Activated CD4-positive, alpha-beta T cell treated with anti-CD3 and anti-CD28 coated beads for 36 hours (primary cell): ENCODE measurements at regions of chr7 and their contacts with region 1.

Region 1: DNA sequence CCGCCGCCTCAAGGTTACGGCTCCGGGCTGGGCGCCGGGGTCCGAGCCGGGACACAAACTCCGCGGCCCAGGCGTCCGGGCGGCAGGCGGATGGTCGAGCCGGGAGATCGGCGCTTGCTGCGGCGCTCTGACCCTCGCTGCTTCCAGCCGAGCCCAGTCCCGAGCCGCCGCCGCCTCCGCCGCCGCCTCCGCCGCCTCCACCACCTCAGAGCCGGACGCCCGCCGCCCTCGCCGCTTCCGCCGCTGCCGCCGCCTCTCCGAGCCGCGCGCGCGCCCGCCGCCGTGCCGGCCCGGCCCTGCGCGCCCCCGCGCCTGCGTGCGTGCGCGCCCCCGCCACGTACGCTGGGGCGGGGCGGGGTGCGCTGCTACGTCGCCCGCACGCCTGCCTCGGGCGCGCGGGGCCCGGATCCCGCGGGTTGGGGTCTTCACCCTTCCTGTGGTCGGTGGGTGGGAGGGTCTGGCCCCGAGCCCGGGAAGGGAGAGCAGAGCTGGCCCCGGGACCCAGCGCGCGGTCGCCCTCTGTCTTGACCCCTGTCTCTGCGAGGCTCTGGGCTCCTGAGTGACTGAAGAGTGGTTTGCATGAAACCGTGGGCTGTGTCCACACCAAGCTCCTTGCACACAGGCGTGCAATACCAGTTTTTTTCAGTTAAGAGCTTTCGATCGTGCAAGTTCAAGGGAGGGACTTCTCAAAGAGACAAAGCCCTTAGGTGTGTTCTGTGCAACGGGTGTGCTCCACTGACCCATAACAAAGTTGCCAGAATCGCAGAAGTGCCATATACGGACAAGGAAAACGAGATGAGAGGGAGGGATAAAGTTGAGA is at the start of gene SMURF1:
- DNase-seq: peak; percentile 83
- ATAC-seq: peak; percentile 37
- H3K4me3 Mint-ChIP-seq: peak within 1 kb of the TSS; percentile 91
- H3K27ac Mint-ChIP-seq: peak within 1 kb of the TSS; percentile 93
- H3K4me1 Mint-ChIP-seq: peaks cover 35% of the 10 kb centered on the region
- H3K27me3 Mint-ChIP-seq: peaks cover 5% of the 10 kb centered on the region
- total RNA-seq, gene SMURF1: 12.4 to 13.4 TPM

Region 2: DNA sequence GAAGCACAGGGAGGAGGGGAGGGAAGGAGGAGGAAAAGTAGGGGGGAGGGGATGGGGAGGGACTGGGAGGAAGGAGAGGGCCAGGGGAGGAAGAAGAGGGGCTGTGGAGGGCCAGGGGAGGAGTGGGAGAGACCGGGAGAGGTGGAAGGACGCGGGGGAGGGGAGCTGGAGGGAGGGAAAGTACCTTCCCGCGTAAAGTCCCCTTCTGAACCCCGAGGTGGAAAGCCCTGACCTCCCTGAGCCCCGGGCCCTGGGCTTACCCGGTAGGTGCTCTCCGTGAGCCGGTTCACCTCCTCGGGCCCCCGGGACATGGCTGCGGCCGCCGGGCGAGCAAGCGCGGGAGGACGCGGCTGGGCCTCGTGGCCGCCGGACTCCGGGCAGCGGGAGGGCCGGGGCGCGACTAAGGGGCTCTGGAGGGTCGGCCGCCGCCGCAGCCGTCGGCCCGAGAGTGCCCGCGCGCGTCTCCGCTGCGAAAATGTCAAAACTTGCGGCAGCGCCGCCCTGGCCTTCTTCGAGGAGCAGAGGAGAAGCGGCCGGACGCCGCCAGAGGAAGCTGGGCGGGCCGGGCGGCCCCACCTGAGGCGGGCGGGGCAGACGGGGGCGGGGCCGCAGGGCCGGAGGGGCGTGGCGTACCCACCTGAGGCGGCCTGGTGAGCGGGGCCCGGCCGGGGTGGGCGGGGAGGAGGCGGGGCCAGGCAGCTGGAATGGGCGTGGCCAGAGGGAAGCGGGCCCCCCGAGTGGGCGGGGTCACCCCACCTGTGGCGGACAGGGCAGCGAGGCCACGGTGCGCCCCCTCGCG is 743.3 kb before region 1 on chr7 and contains the start of gene BAIAP2L1:
- CTCF ChIA-PET with region 1: no interaction called
- POLR2A ChIA-PET with region 1: no interaction called
- intact Hi-C with region 1: loop called in 1 of 2 experiments (anchors 5 kb)
- DNase-seq: peak; percentile 93
- ATAC-seq: peak; percentile 89
- H3K4me3 Mint-ChIP-seq: peak within 1 kb of the TSS; percentile 21
- H3K27ac Mint-ChIP-seq: no peak within 1 kb of the TSS
- H3K4me1 Mint-ChIP-seq: peaks cover 7% of the 10 kb centered on the region
- H3K27me3 Mint-ChIP-seq: peaks cover 20% of the 10 kb centered on the region
- total RNA-seq, gene BAIAP2L1: 2.3 to 3.0 TPM

Region 3: GRCh38 chr7:98878365-98879165 is 265.5 kb before region 1 on chr7 and contains the start of gene TRRAP:
- CTCF ChIA-PET with region 1: no interaction called
- POLR2A ChIA-PET with region 1: no interaction called
- intact Hi-C with region 1: loop called (anchors 2 to 5 kb)
- DNase-seq: peak; percentile 88
- ATAC-seq: peak; percentile 67
- H3K4me3 Mint-ChIP-seq: peak within 1 kb of the TSS; percentile 91
- H3K27ac Mint-ChIP-seq: peak within 1 kb of the TSS; percentile 96
- H3K4me1 Mint-ChIP-seq: peaks cover 30% of the 10 kb centered on the region
- H3K27me3 Mint-ChIP-seq: no peaks in the 10 kb centered on the region
- total RNA-seq, gene TRRAP: 51.7 to 54.0 TPM

Region 4: GRCh38 chr7:99102809-99103690 is 41.0 kb before region 1 on chr7:
- CTCF ChIA-PET with region 1: no interaction called
- POLR2A ChIA-PET with region 1: no interaction called
- intact Hi-C with region 1: loop called (anchors 1 to 2 kb)
- DNase-seq: peak; percentile 70
- ATAC-seq: peak; percentile 66
- H3K4me3 Mint-ChIP-seq: no peak overlapping the region
- H3K27ac Mint-ChIP-seq: peak overlapping the region; percentile 69
- H3K4me1 Mint-ChIP-seq: peaks cover 64% of the 10 kb centered on the region
- H3K27me3 Mint-ChIP-seq: no peaks in the 10 kb centered on the region

Region 5: DNA sequence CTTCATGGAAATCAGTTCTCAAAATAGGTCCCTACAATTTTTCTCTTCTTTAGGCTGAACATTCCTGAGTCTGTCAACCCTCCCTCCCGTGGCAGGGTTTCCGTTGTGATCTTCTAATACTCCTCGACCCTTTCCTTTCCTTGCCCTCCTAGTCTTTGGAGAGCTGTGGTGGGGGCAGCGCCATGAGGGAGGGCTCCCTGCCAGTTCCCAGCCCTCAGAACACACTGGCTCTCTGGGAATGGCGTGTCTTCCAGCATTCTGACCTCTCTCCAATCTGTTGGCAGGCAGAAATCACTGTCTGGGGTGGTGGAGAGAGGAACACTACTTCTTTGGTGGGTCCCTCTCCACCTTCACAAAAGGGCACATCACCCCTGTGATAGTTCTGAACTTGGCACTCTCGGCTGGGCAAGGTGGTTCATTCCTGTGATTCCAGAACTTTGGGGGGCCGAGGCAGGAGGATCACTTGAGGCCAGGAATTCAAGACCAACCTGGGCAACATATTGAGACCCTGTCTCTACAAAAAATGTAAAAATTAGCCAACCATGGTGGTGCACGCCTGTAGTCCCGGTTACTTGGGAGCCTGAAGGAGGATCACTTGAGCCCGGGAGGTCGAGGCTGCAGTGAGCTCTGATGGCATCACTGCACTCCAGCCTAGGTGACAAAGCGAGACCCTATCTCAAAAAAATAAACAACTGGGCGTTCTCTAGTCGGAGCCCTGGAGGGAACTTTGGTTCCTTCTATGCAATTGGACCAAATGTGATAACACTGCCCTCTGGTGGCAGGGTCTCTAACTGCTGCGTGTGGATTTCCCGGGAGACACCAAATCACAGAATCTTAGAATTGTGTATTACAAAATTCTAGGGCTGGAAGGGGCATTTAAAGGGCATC is 168.5 kb after region 1 on chr7:
- CTCF ChIA-PET with region 1: interaction called, 3 read pairs
- POLR2A ChIA-PET with region 1: no interaction called
- intact Hi-C with region 1: loop called in 1 of 2 experiments (anchors 5 kb)
- DNase-seq: peak; percentile 84
- ATAC-seq: peak; percentile 37
- H3K4me3 Mint-ChIP-seq: no peak overlapping the region
- H3K27ac Mint-ChIP-seq: no peak overlapping the region
- H3K4me1 Mint-ChIP-seq: peaks cover 16% of the 10 kb centered on the region
- H3K27me3 Mint-ChIP-seq: peaks cover 4% of the 10 kb centered on the region

Region 6: DNA sequence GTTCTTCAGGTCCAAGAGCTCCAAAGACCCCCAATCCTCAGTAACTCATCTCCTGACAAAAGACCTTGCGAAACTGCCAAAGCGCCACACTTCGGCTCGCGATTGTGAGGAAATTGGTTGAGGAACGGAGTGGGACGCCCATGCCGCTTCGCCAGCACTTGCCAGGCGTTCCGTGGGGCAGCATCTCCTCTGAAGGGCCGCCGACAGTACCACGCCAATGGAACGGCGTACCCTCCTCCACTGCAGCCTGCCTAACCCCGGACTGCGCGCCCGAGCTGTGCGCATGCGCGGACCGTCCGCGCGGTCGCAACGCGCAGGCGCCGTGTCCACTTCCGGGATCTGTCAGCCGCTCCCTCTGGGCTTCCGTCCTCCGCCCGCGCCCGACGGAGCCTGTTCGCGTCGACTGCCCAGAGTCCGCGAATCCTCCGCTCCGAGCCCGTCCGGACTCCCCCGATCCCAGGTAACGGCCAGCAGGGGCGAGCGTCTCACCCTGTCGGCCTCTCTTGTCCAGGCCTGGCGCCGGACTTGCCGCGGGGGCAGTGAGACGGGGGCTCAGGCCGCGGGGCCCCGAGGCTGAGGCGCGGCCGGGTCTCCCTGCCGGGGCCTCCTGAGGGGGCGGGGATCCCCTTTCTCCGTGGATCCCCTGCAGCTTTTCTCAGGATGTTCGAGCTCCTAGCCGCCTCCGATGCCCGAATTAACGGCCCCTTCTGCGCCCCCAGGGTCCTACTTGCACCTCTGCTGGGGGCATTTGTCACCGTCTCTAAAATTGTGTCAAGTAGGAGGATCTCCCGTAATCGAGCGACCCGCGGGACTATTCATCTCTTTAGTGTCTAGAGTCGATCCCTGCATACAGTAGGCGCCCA is 181.7 kb after region 1 on chr7 and contains the start of gene ARPC1A:
- CTCF ChIA-PET with region 1: no interaction called
- POLR2A ChIA-PET with region 1: no interaction called
- intact Hi-C with region 1: loop called (anchors 1 to 5 kb)
- DNase-seq: peak; percentile 95
- ATAC-seq: peak; percentile 86
- H3K4me3 Mint-ChIP-seq: peak within 1 kb of the TSS; percentile 85
- H3K27ac Mint-ChIP-seq: peak within 1 kb of the TSS; percentile 75
- H3K4me1 Mint-ChIP-seq: peaks cover 40% of the 10 kb centered on the region
- H3K27me3 Mint-ChIP-seq: no peaks in the 10 kb centered on the region
- total RNA-seq, gene ARPC1A: 52.3 to 65.6 TPM